HAP-1 (cell line): ENCODE measurements at regions of chr9 and their contacts with region 1.

Region 1: DNA sequence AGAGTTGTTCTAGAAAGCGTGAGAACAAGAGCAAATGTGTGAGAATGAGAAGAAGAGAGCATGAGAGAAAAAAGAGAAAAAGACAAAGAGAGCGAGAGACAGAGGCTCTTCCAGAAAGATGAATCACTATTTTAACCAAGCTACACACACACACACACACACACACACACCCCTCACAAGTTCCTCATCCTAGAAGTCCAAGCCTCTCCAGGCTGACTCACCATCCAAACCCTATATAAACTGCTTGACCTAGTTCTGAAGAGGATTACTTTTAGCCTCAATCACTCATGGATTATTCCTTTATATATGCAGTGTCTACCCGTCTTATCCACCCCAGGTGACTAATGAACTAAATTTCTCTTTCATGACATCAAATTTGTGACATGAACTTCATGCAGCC is 37.6 kb downstream of the C9orf57 start:
- DNase-seq: no peak
- H3K4me3 ChIP-seq: no peak overlapping the region
- H3K4me1 ChIP-seq: peaks cover 5% of the 10 kb centered on the region
- H3K27me3 ChIP-seq: no peaks in the 10 kb centered on the region

Region 2: GRCh38 chr9:71806901-71807307 is 215.9 kb before region 1 on chr9:
- in situ Hi-C with region 1: loop called (anchors 10 kb)
- DNase-seq: peak; percentile 80 to 89
- H3K4me3 ChIP-seq: no peak overlapping the region
- H3K4me1 ChIP-seq: peaks cover 7% of the 10 kb centered on the region
- H3K27me3 ChIP-seq: no peaks in the 10 kb centered on the region

Region 3: DNA sequence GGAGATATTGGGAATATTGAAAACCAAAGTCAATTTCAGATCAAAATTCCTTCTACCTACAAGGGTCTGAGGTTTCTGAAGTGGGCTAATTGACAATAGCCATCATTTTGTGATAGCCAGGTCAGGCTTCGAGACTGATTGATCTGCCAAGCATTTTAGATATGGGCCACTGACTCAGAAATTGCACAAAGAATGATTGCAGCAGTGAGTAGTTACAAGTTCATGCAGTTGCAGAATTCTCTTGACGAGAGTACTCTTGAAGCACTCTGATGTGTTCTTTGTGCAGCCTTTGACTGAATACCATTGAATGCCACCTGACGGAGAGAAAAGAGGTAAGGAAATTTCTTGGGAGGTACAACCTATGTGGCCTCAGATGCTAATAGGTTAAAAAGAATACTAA is 29.3 kb after region 1 on chr9:
- in situ Hi-C with region 1: no loop called
- DNase-seq: no peak
- H3K4me3 ChIP-seq: no peak overlapping the region
- H3K4me1 ChIP-seq: no peaks in the 10 kb centered on the region
- H3K27me3 ChIP-seq: no peaks in the 10 kb centered on the region

Region 4: DNA sequence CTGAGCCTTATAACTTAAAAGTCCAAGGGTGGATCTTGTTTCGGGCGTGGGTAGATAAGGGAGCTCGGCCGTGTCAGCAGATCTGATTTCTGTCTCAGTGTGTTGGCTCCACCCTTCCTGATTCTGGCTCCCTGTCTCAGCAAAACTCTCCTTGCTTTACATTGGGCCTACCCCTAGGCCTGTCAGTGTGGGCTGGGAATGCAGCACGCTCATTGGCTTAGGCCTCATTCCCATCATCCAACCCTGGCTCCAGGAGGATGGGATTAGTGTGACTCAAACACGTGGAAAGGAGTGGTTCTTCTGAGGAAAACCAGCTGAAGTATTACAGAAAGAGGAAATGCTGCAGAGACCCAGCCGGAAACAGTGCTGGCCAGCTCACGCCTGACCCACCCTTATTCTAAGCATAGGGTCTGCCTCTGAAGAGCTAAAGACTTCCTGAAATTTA is 282.3 kb after region 1 on chr9:
- in situ Hi-C with region 1: no loop called
- DNase-seq: peak in 1 of 2 experiments; percentile 54
- H3K4me3 ChIP-seq: no peak overlapping the region
- H3K4me1 ChIP-seq: peaks cover 10% of the 10 kb centered on the region
- H3K27me3 ChIP-seq: no peaks in the 10 kb centered on the region